Activated CD4-positive, alpha-beta memory T cell treated with anti-CD3 and anti-CD28 coated beads for 36 hours (primary cell): ENCODE measurements at regions of chr14 and their contacts with region 1.

Region 1: GRCh38 chr14:70999117-70999516 is 91.9 kb downstream of the PCNX1 start:
- DNase-seq: no peak
- H3K4me3 Mint-ChIP-seq: no peak overlapping the region
- H3K27ac Mint-ChIP-seq: peak overlapping the region; percentile 10
- H3K4me1 Mint-ChIP-seq: peaks cover 74% of the 10 kb centered on the region
- H3K27me3 Mint-ChIP-seq: no peaks in the 10 kb centered on the region

Region 2: GRCh38 chr14:70981000-70981952 is 17.8 kb before region 1 on chr14:
- CTCF ChIA-PET with region 1: interaction called, 3 read pairs
- POLR2A ChIA-PET with region 1: interaction called, 3 read pairs
- intact Hi-C with region 1: loop called (anchors 2 kb)
- DNase-seq: no peak
- H3K4me3 Mint-ChIP-seq: peak overlapping the region; percentile 50
- H3K27ac Mint-ChIP-seq: peak overlapping the region; percentile 85
- H3K4me1 Mint-ChIP-seq: peaks cover 52% of the 10 kb centered on the region
- H3K27me3 Mint-ChIP-seq: no peaks in the 10 kb centered on the region

Region 3: GRCh38 chr14:71060274-71060673 is 61.2 kb after region 1 on chr14:
- CTCF ChIA-PET with region 1: no interaction called
- POLR2A ChIA-PET with region 1: no interaction called
- intact Hi-C with region 1: no loop called
- DNase-seq: no peak
- H3K4me3 Mint-ChIP-seq: no peak overlapping the region
- H3K27ac Mint-ChIP-seq: peak overlapping the region; percentile 55
- H3K4me1 Mint-ChIP-seq: peaks cover 8% of the 10 kb centered on the region
- H3K27me3 Mint-ChIP-seq: no peaks in the 10 kb centered on the region